Ascending aorta (tissue), 2 donors: ENCODE measurements at regions of chr19 and their contacts with region 1.

Region 1: GRCh38 chr19:38831142-38831605 is 420 bp downstream of the ECH1 start:
- DNase-seq: peak; percentile 45 to 89
- H3K4me3 ChIP-seq: peak overlapping the region; percentile 71 to 77
- H3K27ac ChIP-seq: peak overlapping the region; percentile 82 to 91
- H3K4me1 ChIP-seq: peaks cover 6 to 25% of the 10 kb centered on the region in 2 donors
- H3K27me3 ChIP-seq: no peaks in the 10 kb centered on the region
- CTCF ChIP-seq: no peak

Region 2: DNA sequence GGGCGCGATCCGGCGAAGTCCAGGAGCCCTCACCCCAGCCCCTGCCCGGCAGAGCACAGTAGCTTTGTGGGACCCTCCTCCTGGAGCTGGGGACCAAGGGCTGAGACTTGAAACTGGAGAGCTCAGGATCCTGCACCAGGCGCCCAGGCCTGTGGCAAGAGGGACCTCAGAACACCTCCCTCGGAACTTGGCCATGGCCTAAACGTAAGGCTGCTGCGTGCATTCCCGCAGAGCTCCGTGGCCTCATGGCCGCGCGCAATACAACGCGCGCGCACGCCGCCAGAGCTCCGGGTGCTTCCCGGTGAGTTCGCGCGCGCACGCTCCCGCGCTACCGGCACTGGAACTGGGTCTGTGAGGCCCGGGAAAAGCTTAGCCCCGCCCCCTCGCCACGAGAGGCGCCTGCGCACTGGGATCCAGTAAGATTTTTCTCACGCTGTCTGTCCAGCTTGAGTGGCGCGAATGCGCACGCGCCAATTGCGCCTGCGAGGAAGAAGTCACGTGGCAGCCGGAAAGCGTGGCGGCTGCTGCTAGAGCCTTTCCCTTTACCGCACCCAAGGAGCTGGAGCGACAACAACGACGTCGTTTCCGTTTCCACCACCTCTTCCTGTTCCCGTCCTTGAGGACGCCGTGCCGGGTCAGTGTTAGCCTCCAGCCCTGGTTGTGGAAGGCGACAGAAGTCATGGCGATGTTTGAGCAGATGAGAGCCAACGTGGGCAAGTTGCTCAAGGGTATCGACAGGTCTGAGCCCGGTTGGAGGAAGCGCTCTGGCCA is 212.4 kb before region 1 on chr19 and contains the start of gene EIF3K:
- intact Hi-C with region 1: loop called (anchors 2 kb)
- DNase-seq: peak; percentile 97 to 99
- H3K4me3 ChIP-seq: peak within 1 kb of the TSS; percentile 75 to 91
- H3K27ac ChIP-seq: peak within 1 kb of the TSS; percentile 87 to 88
- H3K4me1 ChIP-seq: peaks cover 9 to 10% of the 10 kb centered on the region in 2 donors
- H3K27me3 ChIP-seq: no peaks in the 10 kb centered on the region
- CTCF ChIP-seq: no peak
- total RNA-seq, gene EIF3K: 696 TPM

Region 3: GRCh38 chr19:38718747-38719543 is 112.2 kb before region 1 on chr19:
- intact Hi-C with region 1: loop called (anchors 5 kb)
- DNase-seq: peak in 1 of 2 donors; percentile 86
- H3K4me3 ChIP-seq: no peak overlapping the region
- H3K27ac ChIP-seq: peak overlapping the region; percentile 76 to 85
- H3K4me1 ChIP-seq: peaks cover 13 to 47% of the 10 kb centered on the region in 2 donors
- H3K27me3 ChIP-seq: no peaks in the 10 kb centered on the region
- CTCF ChIP-seq: peak in 2 of 3 experiments; percentile 28 to 52